ENCODE measurements at regions of chr5 and their contacts with region 1.

Region 1: GRCh38 chr5:38285226-38285625 is 26.9 kb downstream of the EGFLAM start:
- DNase-seq: no peak
- ATAC-seq: no peak
- H3K4me3 Mint-ChIP-seq: no peak overlapping the region
- H3K27ac Mint-ChIP-seq: no peak overlapping the region
- H3K4me1 Mint-ChIP-seq: no peaks in the 10 kb centered on the region
- H3K27me3 Mint-ChIP-seq: no peaks in the 10 kb centered on the region

Region 2: DNA sequence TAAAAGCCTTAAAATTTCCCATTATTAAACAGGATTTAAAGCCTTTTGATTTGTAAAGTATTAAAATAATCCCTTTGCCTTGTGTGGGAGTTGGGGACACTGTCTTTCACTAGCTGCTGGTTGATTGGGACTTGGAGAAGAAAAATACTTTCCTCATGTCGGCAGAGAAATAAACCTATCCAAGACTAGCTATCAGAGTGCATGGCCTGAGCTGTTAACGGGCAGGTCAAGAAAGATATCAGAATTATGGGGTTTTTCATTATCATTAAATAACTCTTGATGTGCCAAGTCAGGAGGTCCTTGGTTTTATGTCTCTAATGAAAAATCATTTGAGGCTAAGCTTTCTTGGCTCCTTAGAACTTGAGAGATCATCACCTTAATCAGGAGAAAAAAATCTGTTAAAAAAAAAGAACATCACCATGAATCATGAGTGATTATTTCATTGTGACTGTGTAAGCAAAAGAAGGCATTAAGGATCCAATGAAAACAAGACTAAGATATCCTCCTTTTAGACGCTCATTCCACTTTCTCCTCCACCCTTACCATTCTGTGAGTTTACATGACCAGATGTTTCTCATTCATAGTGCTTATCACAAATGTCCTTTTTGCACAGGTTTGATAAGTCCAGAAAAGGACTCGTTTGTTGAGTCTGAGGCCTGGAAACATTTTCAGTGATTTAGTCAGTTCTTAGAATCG is 167.3 kb before region 1 on chr5:
- CTCF ChIA-PET with region 1: no interaction called
- POLR2A ChIA-PET with region 1: no interaction called
- DNase-seq: no peak
- ATAC-seq: no peak
- H3K4me3 Mint-ChIP-seq: no peak overlapping the region
- H3K27ac Mint-ChIP-seq: no peak overlapping the region
- H3K4me1 Mint-ChIP-seq: peaks cover 4% of the 10 kb centered on the region
- H3K27me3 Mint-ChIP-seq: no peaks in the 10 kb centered on the region

Region 3: DNA sequence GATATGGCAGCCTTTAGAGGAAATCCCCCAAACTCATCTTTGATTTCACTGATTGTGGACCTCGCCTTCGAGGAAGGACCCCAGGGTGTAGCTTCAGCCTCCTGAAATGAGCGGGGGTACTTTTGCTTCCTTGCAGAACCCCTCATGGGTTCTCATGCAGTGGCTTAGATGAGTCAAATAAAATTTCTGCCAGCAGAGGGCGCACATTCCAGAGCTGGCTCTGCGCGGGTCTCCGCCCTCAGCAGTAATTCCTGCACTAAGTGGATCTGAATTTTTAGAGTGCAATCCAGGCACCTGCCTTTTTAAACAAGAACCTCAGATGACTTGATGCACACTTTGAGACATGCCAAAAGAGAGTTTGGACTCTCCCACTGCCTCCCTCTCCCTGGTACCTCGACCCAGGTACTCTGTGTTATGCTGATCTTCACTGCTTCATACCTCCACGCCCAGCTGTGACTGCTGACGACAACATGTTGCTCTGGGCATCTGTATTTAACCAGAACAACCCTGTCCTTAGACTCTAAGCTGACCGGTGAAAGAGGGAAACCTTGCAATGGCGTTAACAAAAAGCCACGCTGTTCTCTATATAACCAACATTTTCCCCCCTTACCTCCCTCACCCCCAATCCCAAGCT is 19.6 kb before region 1 on chr5:
- CTCF ChIA-PET with region 1: interaction called, 11 read pairs
- POLR2A ChIA-PET with region 1: no interaction called
- DNase-seq: peak; percentile 64
- ATAC-seq: peak; percentile 67
- H3K4me3 Mint-ChIP-seq: no peak overlapping the region
- H3K27ac Mint-ChIP-seq: no peak overlapping the region
- H3K4me1 Mint-ChIP-seq: no peaks in the 10 kb centered on the region
- H3K27me3 Mint-ChIP-seq: peaks cover 19% of the 10 kb centered on the region

Measured in activated CD8-positive, alpha-beta T cell treated with anti-CD3 and anti-CD28 coated beads, Interleukin-2, amount 10 ng/mL, durations not matched to agents 7 days and 5 days (primary cell).